CD4-positive, alpha-beta T cell (primary cell): ENCODE measurements at regions of chr1 and their contacts with region 1.

Region 1: DNA sequence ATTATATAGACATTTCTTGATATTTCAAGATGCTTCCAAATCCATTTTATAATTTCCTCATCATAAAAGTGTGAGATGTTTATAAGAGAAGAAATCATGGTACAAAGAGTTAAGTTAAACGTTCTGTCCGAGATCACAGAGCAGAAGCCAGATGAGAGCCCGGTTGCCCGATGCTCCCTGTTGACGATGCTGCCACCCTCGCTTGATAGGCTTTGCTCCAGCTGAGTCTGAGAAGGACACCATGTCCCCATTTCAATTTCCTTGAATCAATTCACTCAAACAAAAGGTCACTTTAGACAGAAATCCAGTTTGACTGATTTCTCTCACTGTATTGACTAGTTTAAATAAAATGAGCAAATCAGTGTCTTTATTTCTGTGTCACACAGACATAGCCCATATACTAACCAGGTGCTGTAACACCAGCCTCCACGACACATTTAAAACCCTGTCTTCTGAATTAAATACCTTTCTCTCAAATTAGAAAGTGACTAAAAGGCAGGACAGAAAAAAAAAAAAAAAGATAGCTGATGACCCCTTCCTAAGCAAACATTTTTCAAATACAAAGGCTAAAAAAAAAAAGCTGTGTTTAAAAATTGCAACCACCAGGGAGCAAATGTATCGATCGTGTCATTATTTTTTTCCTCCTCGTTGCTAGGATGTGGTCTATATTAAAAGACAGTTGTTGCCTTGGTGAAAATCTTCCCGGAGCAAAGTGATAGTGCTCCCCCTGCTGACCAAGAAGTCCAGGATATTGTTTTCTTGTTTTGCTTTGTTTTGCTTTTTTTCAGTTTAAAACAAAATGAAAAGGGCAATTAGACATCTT is 35.2 kb downstream of the DNASE2B start:
- DNase-seq: peak in 12 of 14 experiments; percentile 21 to 91 (median 40)
- ATAC-seq: peak; percentile 79
- H3K4me3 ChIP-seq: peak overlapping the region; percentile 32
- H3K4me3 Mint-ChIP-seq: peak overlapping the region; percentile 68
- H3K27ac ChIP-seq: peak overlapping the region in 1 of 2 donors; percentile 39
- H3K27ac Mint-ChIP-seq: no peak overlapping the region
- H3K4me1 ChIP-seq: peaks cover 25% of the 10 kb centered on the region
- H3K4me1 Mint-ChIP-seq: peaks cover 11% of the 10 kb centered on the region
- H3K27me3 ChIP-seq: no peaks in the 10 kb centered on the region
- H3K27me3 Mint-ChIP-seq: no peaks in the 10 kb centered on the region
- CTCF ChIP-seq: peak; percentile 85

Region 2: GRCh38 chr1:84298328-84298683 is 135.2 kb before region 1 on chr1:
- CTCF ChIA-PET with region 1: interaction called, 3 read pairs
- POLR2A ChIA-PET with region 1: interaction called, 5 read pairs
- intact Hi-C with region 1: loop called (anchors 2 to 10 kb)
- DNase-seq: peak in 12 of 14 experiments; percentile 5 to 74 (median 44)
- ATAC-seq: peak; percentile 72
- H3K4me3 ChIP-seq: peak overlapping the region; percentile 82
- H3K4me3 Mint-ChIP-seq: peak overlapping the region; percentile 89
- H3K27ac ChIP-seq: no peak overlapping the region
- H3K27ac Mint-ChIP-seq: peak overlapping the region; percentile 37
- H3K4me1 ChIP-seq: peaks cover 24% of the 10 kb centered on the region
- H3K4me1 Mint-ChIP-seq: peaks cover 48% of the 10 kb centered on the region
- H3K27me3 ChIP-seq: peaks cover 0 to 9% of the 10 kb centered on the region in 2 experiments
- H3K27me3 Mint-ChIP-seq: peaks cover 12% of the 10 kb centered on the region
- CTCF ChIP-seq: no peak

Region 3: DNA sequence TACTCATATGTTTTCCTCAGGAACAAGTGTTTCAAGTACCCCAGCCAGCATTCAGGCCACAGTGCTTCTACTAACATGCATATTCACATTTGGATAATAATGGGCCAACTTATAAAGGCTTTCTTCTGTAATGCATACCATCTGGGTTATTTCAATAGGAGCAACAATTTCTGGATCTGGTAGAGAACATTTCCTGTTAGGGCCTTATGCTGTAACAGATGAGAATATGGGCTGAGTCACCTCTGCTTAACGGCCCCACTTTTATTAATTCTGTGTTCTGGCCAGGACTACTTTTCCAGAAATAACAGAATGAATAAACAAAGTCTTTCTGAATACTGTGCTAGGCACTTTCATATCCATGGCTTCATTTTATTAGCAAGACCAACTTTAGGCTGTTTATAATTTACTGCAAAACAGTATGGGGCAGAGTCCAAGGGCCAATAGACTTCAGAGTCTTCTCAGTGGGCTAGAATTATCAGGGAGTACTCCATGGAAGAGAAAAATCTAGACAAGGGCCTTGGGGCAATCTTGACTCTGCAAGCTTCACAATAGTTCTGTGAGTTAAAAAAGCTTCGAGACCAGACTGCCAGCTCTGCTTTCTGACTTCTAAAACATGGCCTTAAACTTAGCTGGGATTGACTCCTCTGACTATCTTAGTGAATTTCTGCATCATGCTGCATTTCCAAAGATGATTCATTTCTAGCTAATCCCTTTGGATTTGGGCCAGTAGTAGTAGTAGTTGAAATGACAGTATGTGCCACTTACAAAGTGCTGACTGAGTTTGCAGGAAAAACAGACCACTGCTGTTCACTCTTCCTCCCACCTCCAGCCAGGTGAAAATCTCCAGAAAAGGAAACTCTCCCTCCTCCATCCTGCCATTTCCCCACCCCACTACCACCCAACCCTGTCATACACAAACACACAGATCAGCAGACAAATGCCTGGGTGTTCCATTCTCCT is 265.0 kb after region 1 on chr1:
- CTCF ChIA-PET with region 1: no interaction called
- POLR2A ChIA-PET with region 1: no interaction called
- intact Hi-C with region 1: loop called (anchors 5 kb)
- DNase-seq: no peak
- ATAC-seq: no peak
- H3K4me3 ChIP-seq: no peak overlapping the region
- H3K4me3 Mint-ChIP-seq: no peak overlapping the region
- H3K27ac ChIP-seq: no peak overlapping the region
- H3K27ac Mint-ChIP-seq: no peak overlapping the region
- H3K4me1 ChIP-seq: peaks cover 3% of the 10 kb centered on the region
- H3K4me1 Mint-ChIP-seq: peaks cover 38% of the 10 kb centered on the region
- H3K27me3 ChIP-seq: peaks cover 0 to 4% of the 10 kb centered on the region in 2 experiments
- H3K27me3 Mint-ChIP-seq: peaks cover 11% of the 10 kb centered on the region
- CTCF ChIP-seq: no peak